Endothelial cell of umbilical vein (primary cell): ENCODE measurements at regions of chr11 and their contacts with region 1.

Region 1: GRCh38 chr11:71489311-71490048 is 36.5 kb downstream of the NADSYN1 start:
- DNase-seq: peak; percentile 73
- H3K4me3 ChIP-seq: no peak overlapping the region
- H3K27ac ChIP-seq: peak overlapping the region; percentile 78
- H3K4me1 ChIP-seq: peaks cover 25% of the 10 kb centered on the region
- H3K27me3 ChIP-seq: no peaks in the 10 kb centered on the region
- CTCF ChIP-seq: no peak
- POLR2A ChIP-seq: peak; percentile 37

Region 2: GRCh38 chr11:71580057-71581003 is 90.8 kb after region 1 on chr11:
- CTCF ChIA-PET with region 1: interaction called, 9 read pairs
- POLR2A ChIA-PET with region 1: no interaction called
- dilution Hi-C with region 1: no loop called
- intact Hi-C with region 1: loop called (anchors 10 kb)
- DNase-seq: peak; percentile 63
- H3K4me3 ChIP-seq: no peak overlapping the region
- H3K27ac ChIP-seq: no peak overlapping the region
- H3K4me1 ChIP-seq: no peaks in the 10 kb centered on the region
- H3K27me3 ChIP-seq: peaks cover 0 to 2% of the 10 kb centered on the region in 2 experiments
- CTCF ChIP-seq: peak; percentile 76 to 86
- POLR2A ChIP-seq: no peak